Activated B cell treated with CpG ODN at 0.5 μM for 24 hours (primary cell): ENCODE measurements at regions of chr15 and their contacts with region 1.

Region 1: DNA sequence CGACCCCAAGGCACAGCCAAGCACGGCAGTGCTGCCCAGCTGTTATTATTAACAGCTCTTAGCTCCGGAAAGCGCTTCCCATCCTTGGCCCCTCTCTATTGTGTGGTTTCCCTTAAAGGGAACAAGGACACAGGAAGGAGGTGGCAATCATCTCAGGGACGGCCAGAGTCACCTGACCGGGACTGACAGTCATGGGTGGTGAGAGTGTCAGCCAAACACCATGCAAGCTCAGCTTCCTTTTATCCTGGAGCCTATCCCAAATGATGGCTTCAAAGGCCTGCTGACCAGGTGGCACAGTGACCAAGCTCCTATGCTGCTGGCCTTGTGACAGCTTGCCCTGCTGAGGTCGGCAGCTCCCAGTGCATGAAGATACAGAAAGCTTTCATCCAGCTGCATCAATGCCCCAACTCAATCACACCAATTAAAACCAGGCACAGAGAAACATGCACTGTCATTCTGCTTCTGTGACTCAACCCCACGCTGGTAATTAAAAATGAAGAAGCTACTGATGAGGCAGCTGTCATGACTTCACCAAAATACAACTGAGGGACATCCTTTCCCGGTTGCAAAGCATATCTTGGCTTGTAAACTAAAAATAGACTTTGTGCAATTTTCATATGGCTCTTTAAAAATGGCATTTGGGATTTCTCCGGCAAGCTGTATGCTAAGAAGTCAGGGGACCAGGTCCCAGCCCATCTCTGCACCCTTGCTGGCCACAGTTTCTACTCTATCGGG is 34.0 kb downstream of the PCSK6 start:
- DNase-seq: no peak
- ATAC-seq: no peak
- H3K4me3 Mint-ChIP-seq: no peak overlapping the region
- H3K27ac Mint-ChIP-seq: no peak overlapping the region
- H3K4me1 Mint-ChIP-seq: peaks cover 10% of the 10 kb centered on the region
- H3K27me3 Mint-ChIP-seq: peaks cover 30% of the 10 kb centered on the region
- CTCF ChIP-seq: no peak

Region 2: GRCh38 chr15:100940767-100941379 is 514.6 kb before region 1 on chr15:
- CTCF ChIA-PET with region 1: no interaction called
- POLR2A ChIA-PET with region 1: no interaction called
- intact Hi-C with region 1: no loop called
- DNase-seq: no peak
- ATAC-seq: peak; percentile 87
- H3K4me3 Mint-ChIP-seq: no peak overlapping the region
- H3K27ac Mint-ChIP-seq: no peak overlapping the region
- H3K4me1 Mint-ChIP-seq: peaks cover 25% of the 10 kb centered on the region
- H3K27me3 Mint-ChIP-seq: no peaks in the 10 kb centered on the region
- CTCF ChIP-seq: no peak

Region 3: DNA sequence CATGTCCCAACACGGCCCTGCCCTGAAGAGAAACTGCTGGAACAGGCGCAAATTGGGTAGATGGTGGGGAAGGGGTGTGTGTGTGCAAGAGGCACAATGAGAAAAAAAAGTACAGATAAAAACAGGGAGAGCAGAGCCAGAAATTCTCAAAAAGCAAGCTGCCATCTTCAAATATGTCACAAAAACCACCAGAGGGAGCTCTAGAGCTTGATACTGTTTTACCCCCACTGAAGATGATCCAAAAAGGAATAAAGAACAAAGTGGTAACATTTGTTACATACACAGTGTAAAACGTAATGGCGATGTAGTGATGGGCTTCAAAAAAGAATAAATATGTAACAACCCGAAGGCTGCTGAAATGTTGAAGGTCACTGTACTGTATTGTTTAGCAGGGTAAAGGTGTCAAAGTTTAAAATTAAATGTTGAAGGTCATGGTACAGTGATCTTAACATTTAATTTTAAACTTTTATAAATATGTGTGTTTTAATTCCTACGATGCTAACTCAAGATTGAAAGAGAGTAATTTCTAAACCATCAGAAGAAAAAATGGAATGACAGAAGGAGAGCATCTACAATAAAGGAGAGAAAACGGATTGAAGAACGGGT is 166.4 kb before region 1 on chr15:
- CTCF ChIA-PET with region 1: no interaction called
- POLR2A ChIA-PET with region 1: no interaction called
- intact Hi-C with region 1: loop called (anchors 5 kb)
- DNase-seq: no peak
- ATAC-seq: peak; percentile 40
- H3K4me3 Mint-ChIP-seq: no peak overlapping the region
- H3K27ac Mint-ChIP-seq: no peak overlapping the region
- H3K4me1 Mint-ChIP-seq: peaks cover 42% of the 10 kb centered on the region
- H3K27me3 Mint-ChIP-seq: no peaks in the 10 kb centered on the region
- CTCF ChIP-seq: no peak

Region 4: DNA sequence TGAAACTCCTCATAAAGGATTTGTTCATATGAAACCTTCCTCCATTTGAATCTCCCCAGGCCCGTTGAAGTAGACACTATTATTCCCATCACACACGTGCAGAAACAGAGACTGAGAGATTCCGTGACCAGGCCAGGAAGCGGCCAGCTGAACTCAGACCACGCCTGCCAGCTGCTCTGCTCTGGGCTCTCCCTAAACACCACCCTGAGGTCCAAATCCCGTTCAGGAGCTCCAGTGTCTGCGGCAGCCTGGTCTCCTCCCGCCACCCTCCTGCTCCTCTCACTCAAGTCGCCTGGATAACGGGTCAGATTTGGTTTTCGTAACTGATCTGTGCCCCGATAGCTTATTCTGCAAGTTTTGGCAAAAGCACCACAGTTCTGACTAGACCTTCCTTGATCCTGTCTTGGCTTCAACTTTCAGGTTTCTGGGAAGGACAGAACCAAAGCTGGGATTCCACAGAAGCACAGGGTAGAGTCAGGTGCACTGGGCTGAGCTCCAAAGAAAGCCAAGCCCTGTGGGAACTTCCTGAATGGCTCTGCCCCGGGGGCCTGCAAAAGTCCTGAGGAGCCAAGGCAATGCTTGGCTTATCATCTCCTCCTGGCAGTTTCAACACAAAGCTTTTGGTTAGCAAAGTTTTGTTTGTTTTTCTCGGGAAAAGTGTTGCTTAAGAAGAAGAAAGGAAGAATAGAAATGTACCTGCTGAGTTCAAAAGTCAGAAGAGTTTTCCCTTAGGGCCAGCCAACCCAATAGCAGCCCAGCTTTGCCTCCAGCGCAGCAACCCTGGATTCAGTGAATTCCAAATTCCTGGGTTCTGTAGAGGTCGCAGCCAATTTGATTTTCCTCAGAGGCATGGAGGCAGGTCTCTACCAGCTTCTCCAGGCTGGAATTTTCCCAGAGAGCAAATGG is 106.6 kb before region 1 on chr15:
- CTCF ChIA-PET with region 1: no interaction called
- POLR2A ChIA-PET with region 1: no interaction called
- intact Hi-C with region 1: no loop called
- DNase-seq: no peak
- ATAC-seq: no peak
- H3K4me3 Mint-ChIP-seq: no peak overlapping the region
- H3K27ac Mint-ChIP-seq: no peak overlapping the region
- H3K4me1 Mint-ChIP-seq: no peaks in the 10 kb centered on the region
- H3K27me3 Mint-ChIP-seq: peaks cover 24% of the 10 kb centered on the region
- CTCF ChIP-seq: no peak

Region 5: DNA sequence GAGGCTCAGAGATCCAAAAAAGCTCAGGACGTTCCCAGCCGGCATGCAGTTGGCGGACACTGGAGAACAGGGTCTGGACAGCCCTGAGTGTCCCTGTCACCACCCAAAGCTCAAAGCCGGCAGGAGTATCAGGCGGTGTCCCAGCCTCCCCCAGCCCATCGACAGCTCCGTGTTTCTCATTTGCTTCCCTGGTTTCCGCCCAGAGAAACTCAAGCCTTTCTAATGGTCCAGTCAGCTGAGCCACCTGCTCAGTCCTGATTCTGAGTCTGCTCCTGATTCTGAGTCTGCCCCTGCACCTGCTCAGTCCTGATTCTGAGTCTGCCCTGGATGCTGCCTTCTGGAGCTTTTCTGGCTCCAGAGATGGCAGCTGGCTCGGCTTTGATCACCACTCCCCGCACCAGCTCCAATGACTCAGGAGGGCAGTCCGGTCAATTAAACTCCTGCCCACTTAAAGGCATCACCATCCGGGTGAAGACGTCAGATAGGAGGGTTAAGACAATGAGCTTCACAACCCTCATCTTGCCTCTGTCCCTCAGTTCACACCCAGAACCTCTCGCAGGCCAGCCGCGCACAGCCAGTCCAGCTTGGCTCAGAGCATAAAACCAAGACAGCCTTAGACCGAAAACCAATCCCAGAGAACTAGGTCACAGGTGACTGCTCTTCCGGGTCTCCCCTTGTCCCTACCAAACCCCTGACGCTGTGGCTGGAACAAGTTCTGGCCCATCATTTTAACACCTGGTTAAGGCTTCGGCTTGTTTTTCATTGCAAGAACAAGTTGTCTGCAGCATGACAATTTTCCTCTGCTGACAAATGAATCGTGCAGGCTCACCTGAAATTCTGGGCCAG is 27.3 kb after region 1 on chr15:
- CTCF ChIA-PET with region 1: no interaction called
- POLR2A ChIA-PET with region 1: no interaction called
- intact Hi-C with region 1: no loop called
- DNase-seq: no peak
- ATAC-seq: no peak
- H3K4me3 Mint-ChIP-seq: no peak overlapping the region
- H3K27ac Mint-ChIP-seq: no peak overlapping the region
- H3K4me1 Mint-ChIP-seq: no peaks in the 10 kb centered on the region
- H3K27me3 Mint-ChIP-seq: peaks cover 20% of the 10 kb centered on the region
- CTCF ChIP-seq: no peak

Region 6: DNA sequence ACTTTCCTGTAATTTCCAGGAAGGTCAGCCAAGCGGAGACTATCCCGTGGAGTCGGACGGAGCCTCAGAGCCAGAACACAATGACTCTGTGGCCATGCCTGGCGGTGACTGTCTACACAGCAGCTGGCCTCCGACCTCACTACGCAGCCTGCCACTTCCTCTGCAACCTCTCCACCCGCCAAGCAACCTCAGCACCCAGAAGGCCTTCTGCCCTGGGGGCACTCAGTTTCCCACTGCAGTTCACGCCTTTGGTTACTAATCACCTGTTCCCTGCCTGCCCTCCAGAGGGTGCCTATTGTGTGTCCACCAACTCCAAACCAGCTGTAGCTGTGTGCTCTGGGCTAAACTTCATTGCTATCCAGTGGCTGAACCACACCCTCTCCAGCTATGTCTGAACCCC is 152.7 kb after region 1 on chr15:
- CTCF ChIA-PET with region 1: no interaction called
- POLR2A ChIA-PET with region 1: no interaction called
- intact Hi-C with region 1: no loop called
- DNase-seq: no peak
- ATAC-seq: no peak
- H3K4me3 Mint-ChIP-seq: no peak overlapping the region
- H3K27ac Mint-ChIP-seq: no peak overlapping the region
- H3K4me1 Mint-ChIP-seq: no peaks in the 10 kb centered on the region
- H3K27me3 Mint-ChIP-seq: peaks cover 7% of the 10 kb centered on the region
- CTCF ChIP-seq: no peak